AG04449 (cell line): ENCODE measurements at regions of chr7 and their contacts with region 1.

Region 1: GRCh38 chr7:104862719-104863118 is 151.3 kb upstream of the KMT2E start:
- DNase-seq: no peak
- H3K4me3 ChIP-seq: no peak overlapping the region
- CTCF ChIP-seq: peak; percentile 32

Region 2: DNA sequence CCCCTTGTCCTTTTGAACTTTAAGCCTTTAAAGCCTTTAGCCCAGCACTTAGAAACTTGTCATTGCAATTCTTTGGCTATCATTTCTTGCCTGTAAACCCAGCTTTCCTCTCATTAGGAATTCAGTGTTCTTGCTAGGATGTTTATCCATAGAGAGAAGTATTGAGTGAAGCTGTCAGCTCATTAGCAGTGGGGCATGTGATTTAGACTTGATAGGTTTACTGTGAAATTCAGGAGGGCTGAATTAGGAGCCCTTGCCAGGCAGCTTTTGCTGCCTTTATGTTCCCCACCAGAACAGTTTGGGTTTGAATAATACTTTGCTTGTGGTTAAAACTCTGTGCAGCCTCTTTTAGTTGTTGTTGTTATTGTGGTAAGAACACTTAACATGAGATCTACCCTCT is 494.8 kb before region 1 on chr7:
- CTCF ChIA-PET with region 1: no interaction called
- POLR2A ChIA-PET with region 1: no interaction called
- DNase-seq: no peak
- H3K4me3 ChIP-seq: no peak overlapping the region
- CTCF ChIP-seq: no peak

Region 3: GRCh38 chr7:104758504-104758903 is 104.2 kb before region 1 on chr7:
- CTCF ChIA-PET with region 1: no interaction called
- POLR2A ChIA-PET with region 1: no interaction called
- DNase-seq: no peak
- H3K4me3 ChIP-seq: no peak overlapping the region
- CTCF ChIP-seq: no peak

Region 4: GRCh38 chr7:104848138-104848990 is 14.4 kb before region 1 on chr7:
- CTCF ChIA-PET with region 1: interaction called, 22 read pairs
- POLR2A ChIA-PET with region 1: no interaction called
- DNase-seq: no peak
- H3K4me3 ChIP-seq: no peak overlapping the region
- CTCF ChIP-seq: peak; percentile 78

Region 5: GRCh38 chr7:104873346-104873849 is 10.7 kb after region 1 on chr7:
- CTCF ChIA-PET with region 1: interaction called, 12 read pairs
- POLR2A ChIA-PET with region 1: no interaction called
- DNase-seq: no peak
- H3K4me3 ChIP-seq: no peak overlapping the region
- CTCF ChIP-seq: no peak